ENCODE measurements at regions of chr12 and their contacts with region 1.

Region 1: DNA sequence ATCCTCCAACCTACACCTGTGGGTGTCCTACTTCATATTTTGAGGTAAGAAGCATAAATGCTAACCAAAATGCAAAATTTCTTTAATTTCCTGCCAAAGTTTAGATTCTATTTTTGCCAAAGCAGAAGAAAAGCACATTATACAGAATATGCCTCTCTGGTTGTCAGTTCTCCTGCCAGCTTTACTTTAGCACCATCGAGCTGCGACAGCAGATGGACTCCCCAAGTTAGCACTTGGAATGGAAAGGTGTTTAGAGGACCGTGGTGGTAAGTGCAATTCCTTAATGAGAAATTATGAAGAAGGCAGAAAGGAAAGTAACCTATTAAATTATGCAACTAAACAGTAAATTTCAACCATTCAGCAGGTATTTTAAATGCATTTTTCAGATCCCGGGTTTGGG is 326.6 kb downstream of the RERGL start:
- DNase-seq: no peak
- ATAC-seq: no peak
- H3K4me3 ChIP-seq: no peak overlapping the region
- H3K4me3 Mint-ChIP-seq: no peak overlapping the region
- H3K27ac ChIP-seq: no peak overlapping the region
- H3K27ac Mint-ChIP-seq: no peak overlapping the region
- H3K4me1 ChIP-seq: no peaks in the 10 kb centered on the region
- H3K4me1 Mint-ChIP-seq: no peaks in the 10 kb centered on the region
- H3K27me3 ChIP-seq: no peaks in the 10 kb centered on the region
- H3K27me3 Mint-ChIP-seq: no peaks in the 10 kb centered on the region

Region 2: GRCh38 chr12:17352164-17352563 is 411.2 kb before region 1 on chr12:
- CTCF ChIA-PET with region 1: no interaction called
- POLR2A ChIA-PET with region 1: no interaction called
- intact Hi-C with region 1: no loop called
- DNase-seq: no peak
- ATAC-seq: no peak
- H3K4me3 ChIP-seq: no peak overlapping the region
- H3K4me3 Mint-ChIP-seq: no peak overlapping the region
- H3K27ac ChIP-seq: no peak overlapping the region
- H3K27ac Mint-ChIP-seq: no peak overlapping the region
- H3K4me1 ChIP-seq: no peaks in the 10 kb centered on the region
- H3K4me1 Mint-ChIP-seq: no peaks in the 10 kb centered on the region
- H3K27me3 ChIP-seq: no peaks in the 10 kb centered on the region
- H3K27me3 Mint-ChIP-seq: no peaks in the 10 kb centered on the region

Region 3: DNA sequence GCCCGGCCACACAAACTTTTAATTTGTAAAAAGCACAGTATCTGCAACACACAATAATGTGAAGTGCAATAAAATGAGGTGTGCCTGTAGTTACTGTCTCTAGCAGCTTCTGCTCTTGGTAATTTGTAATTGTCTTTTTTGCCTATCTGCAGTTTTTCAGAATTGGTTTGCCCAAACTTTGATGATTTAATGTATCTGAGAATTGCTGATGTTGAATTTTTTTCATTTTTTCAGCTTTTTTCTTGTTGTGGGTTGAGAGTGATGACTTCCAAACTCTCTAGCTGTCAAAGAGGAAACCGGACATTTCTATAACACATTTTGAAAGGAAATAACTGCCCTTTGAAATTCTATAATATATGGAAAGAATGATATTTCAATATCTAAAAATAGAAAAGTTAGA is 89.7 kb after region 1 on chr12:
- CTCF ChIA-PET with region 1: no interaction called
- POLR2A ChIA-PET with region 1: no interaction called
- intact Hi-C with region 1: loop called (anchors 2 to 5 kb)
- DNase-seq: no peak
- ATAC-seq: no peak
- H3K4me3 ChIP-seq: no peak overlapping the region
- H3K4me3 Mint-ChIP-seq: no peak overlapping the region
- H3K27ac ChIP-seq: no peak overlapping the region
- H3K27ac Mint-ChIP-seq: no peak overlapping the region
- H3K4me1 ChIP-seq: no peaks in the 10 kb centered on the region
- H3K4me1 Mint-ChIP-seq: no peaks in the 10 kb centered on the region
- H3K27me3 ChIP-seq: no peaks in the 10 kb centered on the region
- H3K27me3 Mint-ChIP-seq: no peaks in the 10 kb centered on the region